Posterior vena cava (tissue), 2 donors: ENCODE measurements at regions of chr12 and their contacts with region 1.

Region 1: GRCh38 chr12:92248977-92249376 is 103.3 kb upstream of the BTG1 start:
- DNase-seq: no peak

Region 2: DNA sequence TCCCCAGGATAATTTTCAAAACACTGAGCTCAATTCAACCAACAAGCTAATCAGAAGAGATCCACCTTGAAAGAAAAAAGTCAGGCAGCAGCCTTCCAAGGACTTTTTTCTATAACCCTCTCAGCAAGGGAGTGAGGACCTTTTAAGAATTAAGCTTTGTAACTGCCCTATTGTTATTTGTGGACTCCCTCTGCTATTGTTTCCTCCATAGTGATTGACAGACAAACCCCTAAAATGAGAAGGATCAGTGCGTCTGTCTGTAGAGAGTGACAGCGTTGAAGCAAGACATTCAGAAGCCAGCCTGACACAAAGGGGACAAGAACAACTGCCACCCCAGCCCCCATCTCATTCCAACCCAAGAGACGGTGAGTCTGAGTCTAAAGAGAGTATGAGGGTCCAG is 73.0 kb before region 1 on chr12:
- intact Hi-C with region 1: loop called in 1 of 2 experiments (anchors 2 kb)
- DNase-seq: no peak

Region 3: DNA sequence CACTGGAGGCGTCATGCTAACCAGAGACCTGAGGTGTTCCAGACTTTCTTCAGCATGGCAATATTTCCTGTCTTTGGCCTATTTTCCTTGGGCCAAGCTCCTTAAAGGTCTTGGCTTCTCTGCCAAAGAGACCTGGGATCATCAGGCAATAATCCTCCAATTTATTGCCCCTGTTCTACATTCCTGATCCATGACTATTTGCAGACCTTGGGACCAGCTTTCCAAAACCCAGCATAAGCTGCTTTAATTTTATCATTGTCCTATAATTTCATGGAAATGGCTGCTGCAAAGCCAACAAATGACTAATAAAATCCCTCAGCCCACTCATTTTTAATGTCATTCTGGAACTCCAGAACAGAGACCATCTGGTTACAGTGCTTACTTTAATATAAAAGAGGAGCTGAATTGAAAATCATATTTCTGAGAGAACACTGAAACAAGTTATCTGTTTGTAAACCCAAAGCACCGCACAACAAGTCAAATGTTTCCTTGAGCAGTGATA is 63.5 kb after region 1 on chr12:
- intact Hi-C with region 1: no loop called
- DNase-seq: no peak

Region 4: GRCh38 chr12:92396647-92397252 is 147.8 kb after region 1 on chr12:
- intact Hi-C with region 1: no loop called
- DNase-seq: no peak